ENCODE measurements at regions of chr11 and their contacts with region 1.

Region 1: GRCh38 chr11:85694386-85694980 is 8.5 kb upstream of the CCDC89 start:
- DNase-seq: peak; percentile 66
- H3K4me3 ChIP-seq: no peak overlapping the region
- H3K27ac ChIP-seq: no peak overlapping the region
- H3K4me1 ChIP-seq: no peaks in the 10 kb centered on the region
- H3K27me3 ChIP-seq: peaks cover 8 to 10% of the 10 kb centered on the region in 2 experiments
- CTCF ChIP-seq: peak; percentile 29 to 43
- POLR2A ChIP-seq: no peak

Region 2: GRCh38 chr11:85231588-85231987 is 462.9 kb before region 1 on chr11:
- CTCF ChIA-PET with region 1: no interaction called
- POLR2A ChIA-PET with region 1: no interaction called
- dilution Hi-C with region 1: no loop called
- intact Hi-C with region 1: no loop called
- DNase-seq: no peak
- H3K4me3 ChIP-seq: no peak overlapping the region
- H3K27ac ChIP-seq: no peak overlapping the region
- H3K4me1 ChIP-seq: no peaks in the 10 kb centered on the region
- H3K27me3 ChIP-seq: no peaks in the 10 kb centered on the region
- CTCF ChIP-seq: no peak
- POLR2A ChIP-seq: no peak

Region 3: DNA sequence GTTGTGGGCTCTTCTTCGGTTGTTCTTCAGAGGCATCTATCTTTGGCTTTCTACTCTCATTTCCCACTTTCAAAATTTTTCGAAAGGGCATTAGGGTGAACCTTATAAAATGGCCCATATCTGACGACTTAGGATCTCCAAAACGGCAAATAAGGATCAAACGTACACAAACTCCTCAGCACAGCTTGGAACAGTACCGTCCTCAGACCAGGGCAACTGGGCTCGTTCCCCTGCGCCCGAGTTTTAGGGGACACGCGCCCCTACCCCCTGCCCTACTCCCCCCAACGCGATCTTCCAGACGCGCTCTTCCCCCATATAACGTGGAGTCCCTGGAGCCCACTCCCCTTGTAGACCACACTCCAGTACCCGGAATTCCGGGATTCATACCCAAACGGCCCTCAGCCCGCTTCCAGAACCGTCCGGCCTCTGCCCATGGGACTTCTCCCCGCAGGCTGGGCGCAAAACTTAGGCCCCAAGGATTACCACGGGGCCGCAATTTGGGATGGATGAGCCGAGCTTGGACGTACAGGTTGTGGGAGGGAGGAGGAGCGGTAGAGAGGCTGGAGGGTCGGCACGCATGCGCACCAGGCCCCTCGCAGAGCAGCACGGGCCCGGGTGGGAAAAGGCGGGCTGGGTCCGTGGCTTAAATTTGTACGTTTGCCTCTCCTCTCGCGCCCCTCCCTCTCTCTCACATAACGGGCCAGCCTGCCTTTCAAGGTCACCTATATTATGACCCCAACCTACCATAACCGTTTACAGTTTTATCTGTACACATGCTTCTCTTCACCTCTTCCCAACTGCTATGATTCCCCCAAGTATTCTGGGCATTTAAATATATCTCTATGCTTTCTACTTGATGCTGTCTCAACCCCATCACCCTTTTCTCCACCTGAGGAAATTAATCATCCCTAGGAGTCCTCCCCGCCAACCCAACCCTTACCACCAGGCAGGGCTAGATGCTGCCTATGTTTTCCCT is 11.9 kb before region 1 on chr11:
- CTCF ChIA-PET with region 1: interaction called, 12 read pairs
- POLR2A ChIA-PET with region 1: no interaction called
- dilution Hi-C with region 1: no loop called
- intact Hi-C with region 1: no loop called
- DNase-seq: peak; percentile 57
- H3K4me3 ChIP-seq: peak overlapping the region; percentile 46 to 68 (median 66)
- H3K27ac ChIP-seq: peak overlapping the region; percentile 15
- H3K4me1 ChIP-seq: peaks cover 4% of the 10 kb centered on the region
- H3K27me3 ChIP-seq: peaks cover 9 to 25% of the 10 kb centered on the region in 2 experiments
- CTCF ChIP-seq: no peak
- POLR2A ChIP-seq: peak; percentile 44

Region 4: GRCh38 chr11:85742873-85743275 is 48.4 kb after region 1 on chr11:
- CTCF ChIA-PET with region 1: no interaction called
- POLR2A ChIA-PET with region 1: no interaction called
- dilution Hi-C with region 1: no loop called
- intact Hi-C with region 1: no loop called
- DNase-seq: no peak
- H3K4me3 ChIP-seq: no peak overlapping the region
- H3K27ac ChIP-seq: no peak overlapping the region
- H3K4me1 ChIP-seq: peaks cover 18% of the 10 kb centered on the region
- H3K27me3 ChIP-seq: no peaks in the 10 kb centered on the region
- CTCF ChIP-seq: no peak
- POLR2A ChIP-seq: no peak

Region 5: DNA sequence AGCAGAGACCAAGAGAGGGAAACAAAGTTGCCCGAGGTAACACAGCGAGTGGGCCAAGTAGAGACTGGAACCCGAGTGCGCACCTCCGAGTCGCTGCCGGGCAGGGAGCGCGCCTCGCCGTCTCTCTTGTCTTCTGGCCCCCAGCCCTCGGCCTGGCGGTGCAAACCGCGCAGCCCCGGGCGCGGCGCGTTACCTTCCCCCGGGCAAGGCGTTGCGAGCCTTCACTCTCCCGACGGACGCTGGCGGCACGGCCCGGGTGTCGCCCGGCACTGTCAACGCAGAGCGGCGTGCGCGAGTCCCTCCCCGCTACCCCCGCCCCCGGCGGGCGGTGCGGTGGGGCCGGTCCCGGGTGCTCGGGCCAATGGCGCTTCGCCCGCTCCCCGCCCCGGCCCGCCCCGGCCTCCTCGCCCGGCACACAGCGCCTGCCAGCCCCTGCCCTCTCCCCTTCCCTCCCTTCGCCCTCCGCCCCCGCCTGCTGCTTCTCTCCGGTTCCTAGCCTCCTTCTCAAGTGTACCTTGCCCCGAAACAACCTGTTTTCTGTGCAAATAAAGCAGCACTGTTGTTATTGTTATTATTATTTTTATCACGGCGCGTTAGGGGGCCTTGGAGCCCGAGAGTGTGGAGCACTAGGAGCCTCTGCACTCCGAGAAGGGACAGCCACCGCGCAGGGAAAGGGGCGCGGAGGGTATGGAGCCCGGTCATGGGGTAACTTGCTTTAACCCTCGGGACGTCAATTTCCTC is 116.6 kb after region 1 on chr11 and contains the start of gene SYTL2:
- CTCF ChIA-PET with region 1: interaction called, 8 read pairs
- POLR2A ChIA-PET with region 1: no interaction called
- dilution Hi-C with region 1: no loop called
- intact Hi-C with region 1: loop called (anchors 1 kb)
- DNase-seq: peak; percentile 57
- H3K4me3 ChIP-seq: peak within 1 kb of the TSS; percentile 19 to 41 (median 26)
- H3K27ac ChIP-seq: no peak within 1 kb of the TSS
- H3K4me1 ChIP-seq: peaks cover 8% of the 10 kb centered on the region
- H3K27me3 ChIP-seq: peaks cover 8 to 18% of the 10 kb centered on the region in 2 experiments
- CTCF ChIP-seq: peak in 1 of 2 donors; percentile 10
- POLR2A ChIP-seq: no peak
- total RNA-seq, gene SYTL2: 2.4 and 3.5 TPM in 2 replicates

Region 6: GRCh38 chr11:85826116-85826855 is 131.8 kb after region 1 on chr11:
- CTCF ChIA-PET with region 1: interaction called, 18 read pairs
- POLR2A ChIA-PET with region 1: no interaction called
- dilution Hi-C with region 1: no loop called
- intact Hi-C with region 1: loop called (anchors 1 kb)
- DNase-seq: peak; percentile 19
- H3K4me3 ChIP-seq: no peak overlapping the region
- H3K27ac ChIP-seq: no peak overlapping the region
- H3K4me1 ChIP-seq: peaks cover 7% of the 10 kb centered on the region
- H3K27me3 ChIP-seq: peaks cover 0 to 2% of the 10 kb centered on the region in 2 experiments
- CTCF ChIP-seq: peak in 1 of 2 donors; percentile 49
- POLR2A ChIP-seq: no peak

Region 7: DNA sequence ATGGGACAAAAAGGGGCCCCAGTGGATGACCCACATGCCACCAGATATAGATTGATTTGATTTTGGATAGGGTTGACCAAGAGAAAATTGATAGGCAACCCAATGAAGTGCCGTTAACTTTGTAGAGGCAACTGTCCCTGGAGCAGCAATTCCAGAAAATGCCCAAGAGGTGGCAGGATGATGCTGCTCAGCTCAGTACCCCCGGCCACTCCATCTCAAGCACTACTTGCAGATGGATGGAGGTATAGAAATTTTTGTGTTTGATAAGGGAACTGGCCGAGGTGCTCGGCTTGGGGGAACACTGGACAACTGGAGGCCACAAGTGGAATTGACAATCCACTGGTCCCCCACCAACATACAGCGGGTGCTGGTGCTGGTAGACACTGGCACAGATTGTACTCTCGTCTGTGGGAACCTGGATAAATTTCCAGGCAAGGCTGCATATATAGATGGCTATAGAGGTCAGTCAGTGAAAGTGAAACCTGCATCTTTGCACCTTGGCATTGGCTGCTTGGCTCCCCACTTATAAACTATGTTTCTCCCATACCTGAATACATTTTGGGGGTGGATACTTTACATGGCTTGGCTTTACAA is 247.0 kb after region 1 on chr11:
- CTCF ChIA-PET with region 1: no interaction called
- POLR2A ChIA-PET with region 1: no interaction called
- dilution Hi-C with region 1: no loop called
- intact Hi-C with region 1: loop called (anchors 10 kb)
- DNase-seq: peak; percentile 71
- H3K4me3 ChIP-seq: no peak overlapping the region
- H3K27ac ChIP-seq: no peak overlapping the region
- H3K4me1 ChIP-seq: peaks cover 12% of the 10 kb centered on the region
- H3K27me3 ChIP-seq: no peaks in the 10 kb centered on the region
- CTCF ChIP-seq: peak; percentile 76
- POLR2A ChIP-seq: no peak

Measured in endothelial cell of umbilical vein (primary cell).